Activated CD8-positive, alpha-beta T cell treated with anti-CD3 and anti-CD28 coated beads for 36 hours (primary cell): ENCODE measurements at regions of chr19 and their contacts with region 1.

Region 1: DNA sequence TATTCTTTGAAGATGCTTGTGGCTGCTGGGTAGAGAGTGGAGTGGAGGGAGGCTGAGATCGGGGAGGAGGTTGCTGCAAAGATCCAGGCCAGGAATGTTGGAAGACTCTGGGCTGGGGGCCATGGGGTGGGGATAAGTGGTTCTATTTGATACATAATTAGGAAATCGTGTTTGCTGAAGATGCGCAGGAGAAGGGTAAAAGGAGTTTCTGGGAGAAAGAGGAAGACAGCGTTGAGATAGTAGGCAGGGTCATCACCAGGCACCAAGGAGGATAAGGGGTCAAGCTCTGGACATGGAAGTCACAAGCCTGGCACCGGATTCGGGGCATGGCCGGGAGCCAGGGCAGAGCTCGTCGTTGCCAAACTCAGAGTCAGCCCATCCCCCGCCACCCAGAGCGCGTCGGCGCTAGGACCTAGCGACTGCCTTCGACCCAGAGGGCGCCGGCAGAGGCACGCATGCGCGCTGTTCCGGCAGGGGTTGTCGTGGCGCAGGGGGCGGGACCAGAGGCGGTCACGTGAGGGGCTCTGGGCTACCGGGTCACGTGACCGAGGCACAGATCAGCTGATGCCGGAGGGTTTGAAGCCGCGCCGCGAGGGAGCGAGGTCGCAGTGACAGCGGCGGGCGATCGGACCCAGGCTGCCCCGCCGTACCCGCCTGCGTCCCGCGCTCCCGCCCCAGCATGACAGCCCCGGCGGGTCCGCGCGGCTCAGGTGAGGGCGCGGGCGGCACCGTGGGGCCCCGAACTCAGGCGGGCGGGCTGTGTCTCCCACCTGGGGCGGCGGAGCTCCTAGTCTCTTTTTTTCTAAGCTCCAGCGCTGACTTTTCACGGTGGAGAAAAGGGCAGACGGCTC is at the start of gene MCOLN1:
- DNase-seq: peak; percentile 100
- ATAC-seq: peak; percentile 98
- H3K4me3 Mint-ChIP-seq: peak within 1 kb of the TSS; percentile 72
- H3K27ac Mint-ChIP-seq: peak within 1 kb of the TSS; percentile 77
- H3K4me1 Mint-ChIP-seq: peaks cover 5% of the 10 kb centered on the region
- H3K27me3 Mint-ChIP-seq: no peaks in the 10 kb centered on the region
- CTCF ChIP-seq: no peak
- total RNA-seq, gene MCOLN1: 7.9 to 9.2 TPM

Region 2: GRCh38 chr19:7535035-7535992 is 13.0 kb after region 1 on chr19 and contains the start of gene PNPLA6:
- CTCF ChIA-PET with region 1: interaction called, 5 read pairs
- POLR2A ChIA-PET with region 1: interaction called, 44 read pairs
- intact Hi-C with region 1: no loop called
- DNase-seq: peak; percentile 97
- ATAC-seq: peak; percentile 81
- H3K4me3 Mint-ChIP-seq: peak within 1 kb of the TSS; percentile 95
- H3K27ac Mint-ChIP-seq: peak within 1 kb of the TSS; percentile 91
- H3K4me1 Mint-ChIP-seq: peaks cover 13% of the 10 kb centered on the region
- H3K27me3 Mint-ChIP-seq: no peaks in the 10 kb centered on the region
- CTCF ChIP-seq: peak; percentile 10
- total RNA-seq, gene PNPLA6: 79.2 to 90.3 TPM